ENCODE measurements at regions of chr7 and their contacts with region 1.

Region 1: DNA sequence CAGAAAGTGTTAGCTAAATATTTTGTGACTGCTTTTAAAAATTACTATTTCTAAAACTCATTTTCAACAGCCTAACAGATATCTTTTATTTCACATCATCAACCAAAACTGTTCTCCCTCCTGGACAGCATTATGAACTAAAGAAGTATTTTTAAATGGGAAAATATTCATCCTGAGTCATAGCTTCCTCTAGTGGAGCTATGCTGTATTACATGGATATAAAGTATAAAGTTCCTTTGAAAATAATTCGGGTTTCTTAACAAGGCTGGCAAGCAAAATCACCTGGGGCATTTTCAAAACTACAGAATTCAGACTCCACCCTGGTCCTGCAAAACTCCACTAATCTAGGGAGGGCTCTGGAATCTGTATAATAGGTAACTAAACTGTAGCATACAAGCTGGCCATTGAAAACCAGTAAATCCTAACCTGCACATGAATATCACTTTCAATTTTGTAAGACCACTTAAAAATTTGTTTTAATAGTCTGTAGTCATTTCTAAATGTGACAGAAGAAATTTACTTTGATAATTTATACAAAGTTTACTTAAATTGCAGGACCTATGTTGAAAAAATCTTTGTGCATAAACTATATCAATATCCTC is 53.5 kb downstream of the SCIN start:
- DNase-seq: peak in 1 of 2 experiments; percentile 18
- H3K4me3 ChIP-seq: no peak overlapping the region
- H3K4me3 Mint-ChIP-seq: no peak overlapping the region
- H3K27ac Mint-ChIP-seq: no peak overlapping the region
- H3K4me1 ChIP-seq: peaks cover 9% of the 10 kb centered on the region; the same call in 1 of the 2 replicates
- H3K4me1 Mint-ChIP-seq: peaks cover 6% of the 10 kb centered on the region
- H3K27me3 ChIP-seq: no peaks in the 10 kb centered on the region
- H3K27me3 Mint-ChIP-seq: peaks cover 2% of the 10 kb centered on the region
- CTCF ChIP-seq: peak; percentile 78

Region 2: GRCh38 chr7:12458520-12459131 is 165.4 kb before region 1 on chr7:
- CTCF ChIA-PET with region 1: interaction called, 3 read pairs
- POLR2A ChIA-PET with region 1: no interaction called
- intact Hi-C with region 1: loop called (anchors 1 kb)
- DNase-seq: peak in 1 of 2 experiments; percentile 55
- H3K4me3 ChIP-seq: no peak overlapping the region
- H3K4me3 Mint-ChIP-seq: no peak overlapping the region
- H3K27ac Mint-ChIP-seq: no peak overlapping the region
- H3K4me1 ChIP-seq: no peaks in the 10 kb centered on the region
- H3K4me1 Mint-ChIP-seq: no peaks in the 10 kb centered on the region
- H3K27me3 ChIP-seq: no peaks in the 10 kb centered on the region
- H3K27me3 Mint-ChIP-seq: no peaks in the 10 kb centered on the region
- CTCF ChIP-seq: peak; percentile 69 to 79

Region 3: DNA sequence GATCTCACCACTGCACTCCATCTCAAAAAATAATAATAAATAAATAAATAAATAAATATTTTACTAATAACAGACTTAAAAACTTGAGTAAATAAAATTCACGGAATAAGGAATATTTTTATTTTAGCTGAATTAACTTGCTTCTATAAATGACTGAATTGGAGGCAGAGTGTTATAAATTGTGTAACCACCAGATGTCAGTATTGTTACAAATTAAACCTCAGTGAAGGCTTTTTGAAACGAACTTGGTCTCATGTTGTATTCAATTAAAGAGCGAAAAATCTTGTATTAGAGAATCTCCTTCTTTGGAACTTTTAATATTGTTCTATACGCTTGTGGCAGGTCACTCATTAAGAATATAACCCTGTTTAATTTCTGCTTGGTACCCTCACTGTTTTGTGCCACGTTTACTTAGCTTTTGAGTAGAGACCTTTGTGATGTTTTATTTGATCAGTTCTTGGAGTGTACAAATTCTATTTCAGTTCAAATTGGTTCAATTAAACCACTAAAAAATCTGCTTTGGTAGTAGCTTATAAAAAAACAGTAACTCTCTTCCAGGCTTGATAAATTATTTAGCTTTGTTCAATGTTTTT is 99.1 kb before region 1 on chr7:
- CTCF ChIA-PET with region 1: interaction called, 15 read pairs
- POLR2A ChIA-PET with region 1: no interaction called
- intact Hi-C with region 1: loop called (anchors 1 kb)
- DNase-seq: peak in 1 of 2 experiments; percentile 23
- H3K4me3 ChIP-seq: no peak overlapping the region
- H3K4me3 Mint-ChIP-seq: no peak overlapping the region
- H3K27ac Mint-ChIP-seq: no peak overlapping the region
- H3K4me1 ChIP-seq: no peaks in the 10 kb centered on the region
- H3K4me1 Mint-ChIP-seq: no peaks in the 10 kb centered on the region
- H3K27me3 ChIP-seq: no peaks in the 10 kb centered on the region
- H3K27me3 Mint-ChIP-seq: peaks cover 8% of the 10 kb centered on the region
- CTCF ChIP-seq: peak; percentile 43 to 73

Region 4: GRCh38 chr7:12570534-12571461 is 53.2 kb before region 1 on chr7 and contains the start of gene SCIN:
- CTCF ChIA-PET with region 1: no interaction called
- POLR2A ChIA-PET with region 1: no interaction called
- intact Hi-C with region 1: loop called (anchors 5 kb)
- DNase-seq: peak; percentile 28 to 38
- H3K4me3 ChIP-seq: peak within 1 kb of the TSS; percentile 32
- H3K4me3 Mint-ChIP-seq: peak within 1 kb of the TSS; percentile 79
- H3K27ac Mint-ChIP-seq: no peak within 1 kb of the TSS
- H3K4me1 ChIP-seq: peaks cover 3% of the 10 kb centered on the region; the same call in 1 of the 2 replicates
- H3K4me1 Mint-ChIP-seq: peaks cover 8% of the 10 kb centered on the region
- H3K27me3 ChIP-seq: no peaks in the 10 kb centered on the region; the same call in 1 of the 2 replicates
- H3K27me3 Mint-ChIP-seq: peaks cover 34% of the 10 kb centered on the region
- CTCF ChIP-seq: no peak
- total RNA-seq, gene SCIN: 0.39 and 0.84 TPM in 2 replicates

Region 5: DNA sequence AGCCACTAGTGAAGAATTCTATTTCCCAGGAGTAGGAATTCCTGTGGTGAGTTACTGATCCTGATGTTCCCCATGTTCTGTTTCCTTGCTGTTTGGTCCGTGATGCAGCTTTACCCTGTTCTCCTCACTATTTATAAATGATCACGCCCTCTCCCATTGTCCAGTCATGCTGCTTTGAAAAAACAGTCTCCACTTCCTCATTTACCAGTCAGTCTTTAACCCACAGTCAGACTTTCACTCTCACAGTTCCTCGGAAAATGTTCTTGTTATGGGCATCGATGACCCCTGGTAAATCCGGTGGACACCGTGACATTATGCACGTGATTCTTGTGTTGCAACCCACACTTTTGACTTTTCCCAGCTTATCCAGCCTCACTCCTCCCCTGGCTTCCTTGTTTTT is 39.1 kb before region 1 on chr7:
- CTCF ChIA-PET with region 1: no interaction called
- POLR2A ChIA-PET with region 1: no interaction called
- intact Hi-C with region 1: no loop called
- DNase-seq: no peak
- H3K4me3 ChIP-seq: no peak overlapping the region
- H3K4me3 Mint-ChIP-seq: no peak overlapping the region
- H3K27ac Mint-ChIP-seq: no peak overlapping the region
- H3K4me1 ChIP-seq: 0 out of 2 replicates have a peak, but pooled peaks cover 7% of the 10 kb centered on the region
- H3K4me1 Mint-ChIP-seq: peaks cover 19% of the 10 kb centered on the region
- H3K27me3 ChIP-seq: no peaks in the 10 kb centered on the region
- H3K27me3 Mint-ChIP-seq: peaks cover 5% of the 10 kb centered on the region
- CTCF ChIP-seq: no peak

Region 6: DNA sequence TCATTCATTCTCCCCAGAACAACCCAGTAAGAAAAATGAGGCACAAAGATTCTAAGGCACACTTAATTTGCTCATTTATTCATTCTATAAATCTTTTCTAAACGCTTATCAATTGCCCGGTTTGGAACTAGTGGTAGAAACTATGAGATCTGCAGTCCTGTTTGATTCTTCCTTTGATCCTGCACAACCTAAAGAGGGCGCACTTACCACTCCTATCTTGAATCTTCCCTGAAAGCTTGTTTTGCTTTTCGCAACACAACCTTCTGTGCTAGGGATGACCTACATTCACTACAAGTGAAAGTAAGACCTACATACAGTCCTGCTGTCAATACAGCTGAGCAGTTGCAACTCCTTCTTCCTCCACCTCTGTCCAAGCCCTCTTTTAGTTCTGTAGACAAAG is 50.9 kb after region 1 on chr7:
- CTCF ChIA-PET with region 1: interaction called, 13 read pairs
- POLR2A ChIA-PET with region 1: no interaction called
- intact Hi-C with region 1: no loop called
- DNase-seq: peak; percentile 49 to 72
- H3K4me3 ChIP-seq: no peak overlapping the region
- H3K4me3 Mint-ChIP-seq: no peak overlapping the region
- H3K27ac Mint-ChIP-seq: no peak overlapping the region
- H3K4me1 ChIP-seq: no peaks in the 10 kb centered on the region; the same call in 1 of the 2 replicates
- H3K4me1 Mint-ChIP-seq: peaks cover 19% of the 10 kb centered on the region
- H3K27me3 ChIP-seq: no peaks in the 10 kb centered on the region
- H3K27me3 Mint-ChIP-seq: no peaks in the 10 kb centered on the region
- CTCF ChIP-seq: peak; percentile 44 to 59